Right ventricle myocardium inferior (tissue), 1 donor: ENCODE measurements at regions of chr5 and their contacts with region 1.

Region 1: GRCh38 chr5:180291943-180292831 is at the start of gene MAPK9:
- DNase-seq: peak; percentile 94
- ATAC-seq: peak; percentile 90
- total RNA-seq, gene MAPK9: 41.7 TPM

Region 2: DNA sequence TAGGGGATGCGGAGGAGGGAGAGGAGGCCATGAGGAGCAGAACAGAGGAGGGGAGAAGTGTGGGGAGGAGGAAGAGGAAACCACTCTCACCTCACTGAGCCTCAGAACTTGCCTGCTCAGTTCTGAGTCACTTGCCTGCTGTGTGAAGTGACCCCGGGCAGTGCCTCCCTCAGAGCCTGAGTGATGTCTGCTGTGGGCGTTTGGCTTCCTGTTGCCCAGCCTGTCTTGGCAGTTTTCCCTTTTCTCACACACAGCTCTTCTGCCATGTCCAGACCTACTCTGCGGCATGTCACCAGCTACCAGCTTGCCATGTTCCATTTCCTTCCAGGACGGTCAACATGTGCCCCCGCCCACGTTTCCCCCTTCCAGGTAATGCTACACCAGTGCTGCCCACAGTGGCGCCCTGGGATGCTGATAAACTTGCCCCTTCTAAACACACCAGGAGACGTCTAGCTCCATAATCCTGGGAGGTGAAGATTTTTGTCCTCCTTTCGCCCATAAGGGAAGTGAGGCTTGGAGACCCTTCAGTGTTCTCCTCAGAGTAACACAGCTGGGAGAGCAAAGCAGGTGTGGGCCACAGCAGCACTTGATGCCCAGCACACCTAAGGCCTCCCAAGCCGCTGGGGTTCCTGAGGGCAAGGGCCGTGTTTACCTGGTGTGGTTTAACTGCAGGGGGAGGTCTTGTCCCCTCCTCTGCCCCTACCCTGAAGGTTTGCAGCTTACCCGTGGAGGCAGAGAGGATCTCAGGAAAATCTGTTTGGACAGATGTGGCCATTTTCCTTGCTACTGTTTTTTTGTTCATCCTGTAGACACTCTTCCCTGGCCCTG is 156.8 kb before region 1 on chr5:
- intact Hi-C with region 1: no loop called
- DNase-seq: no peak
- ATAC-seq: no peak

Region 3: DNA sequence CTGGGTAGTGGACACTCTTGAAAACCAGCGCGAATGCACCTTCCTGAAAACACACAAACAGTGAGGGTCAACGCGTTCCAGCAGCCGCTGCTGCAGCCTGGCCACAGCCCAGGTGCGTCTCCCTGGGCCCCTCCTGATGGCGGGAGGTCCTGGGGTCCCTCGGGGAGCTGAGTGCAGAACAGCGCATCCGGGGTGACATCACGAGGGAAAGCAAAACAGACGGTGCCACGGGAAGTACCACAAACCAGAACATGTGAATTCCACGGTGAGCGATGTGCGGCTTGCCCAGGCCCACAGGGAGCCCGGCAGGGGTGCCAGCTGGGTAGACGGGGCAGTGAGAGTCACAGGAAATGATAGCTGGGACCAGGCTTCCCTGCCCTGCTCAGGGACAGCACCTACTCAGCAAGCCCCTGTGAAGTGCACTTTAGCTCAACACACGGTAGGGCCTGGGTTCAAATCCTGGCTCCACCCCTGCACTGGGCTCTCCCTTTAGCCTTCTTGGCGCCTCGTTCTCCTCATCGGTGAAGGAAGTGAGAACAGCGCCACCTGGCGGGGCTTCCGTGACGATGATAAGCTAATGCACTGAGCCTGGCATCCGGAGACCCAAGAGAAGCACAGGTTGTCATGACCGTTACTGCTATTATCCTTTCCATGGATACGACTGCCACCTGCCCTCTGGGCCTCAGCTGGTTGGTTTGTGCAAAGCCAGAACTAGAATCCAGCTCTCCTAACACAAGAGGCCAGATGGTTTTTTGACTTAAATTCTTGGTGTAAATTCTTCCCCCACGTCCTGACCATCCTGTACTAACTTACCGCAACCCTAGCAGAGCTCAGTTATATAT is 36.3 kb after region 1 on chr5:
- intact Hi-C with region 1: loop called (anchors 5 kb)
- DNase-seq: peak; percentile 94
- ATAC-seq: no peak

Region 4: GRCh38 chr5:180470966-180471582 is 178.9 kb after region 1 on chr5:
- intact Hi-C with region 1: loop called (anchors 1 kb)
- DNase-seq: no peak
- ATAC-seq: peak; percentile 71

Region 5: GRCh38 chr5:180670586-180671359 is 378.6 kb after region 1 on chr5:
- intact Hi-C with region 1: loop called (anchors 5 kb)
- DNase-seq: no peak
- ATAC-seq: peak; percentile 67